ENCODE measurements at regions of chr11 and their contacts with region 1.

Region 1: DNA sequence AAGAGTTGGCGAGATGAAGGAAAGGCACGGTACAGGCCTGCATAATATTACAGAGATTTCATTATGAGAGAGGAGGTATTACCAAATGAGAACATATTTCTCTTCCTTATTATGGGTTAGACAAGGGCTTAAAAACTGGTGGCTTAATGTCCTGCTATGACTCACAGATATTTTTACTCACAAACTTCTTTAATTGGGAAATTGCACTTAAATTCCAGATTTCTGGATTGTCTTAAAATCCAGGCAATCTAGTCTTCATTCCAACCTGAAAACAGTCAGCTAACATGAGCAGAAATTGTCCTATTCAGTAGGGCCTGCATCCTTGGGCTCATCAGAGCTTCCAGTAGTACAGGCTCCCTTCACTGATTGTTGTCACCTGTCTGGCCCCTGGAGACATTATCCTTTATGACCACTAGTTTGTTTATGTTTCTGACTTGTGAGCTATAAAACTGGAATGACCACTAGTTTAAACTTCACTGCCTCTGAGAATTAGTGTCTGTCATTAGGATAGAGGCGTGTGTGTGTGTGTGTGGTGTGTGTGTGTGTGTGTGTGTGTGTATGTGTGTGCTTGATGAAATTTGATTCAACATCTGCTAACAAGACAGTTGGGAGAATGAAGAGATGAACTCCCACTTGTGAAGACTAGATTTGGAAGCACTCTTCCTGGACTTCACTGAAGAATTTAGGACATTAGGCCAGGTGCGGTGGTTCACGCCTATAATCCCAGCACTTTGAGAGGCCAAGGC is 25.1 kb downstream of the DBX1 start:
- DNase-seq: no peak
- ATAC-seq: no peak
- H3K4me3 ChIP-seq: no peak overlapping the region
- H3K27ac ChIP-seq: no peak overlapping the region
- H3K4me1 ChIP-seq: peaks cover 0 to 16% (median 4%) of the 10 kb centered on the region in 12 donors
- H3K27me3 ChIP-seq: peaks cover 0 to 34% (median 0%) of the 10 kb centered on the region in 9 donors
- CTCF ChIP-seq: no peak
- POLR2A ChIP-seq: no peak

Region 2: GRCh38 chr11:20337526-20338154 is 202.5 kb after region 1 on chr11:
- intact Hi-C with region 1: loop called in 3 of 10 experiments (anchors 5 kb)
- DNase-seq: no peak
- ATAC-seq: no peak
- H3K4me3 ChIP-seq: no peak overlapping the region
- H3K27ac ChIP-seq: no peak overlapping the region
- H3K4me1 ChIP-seq: peaks cover 0 to 3% (median 0%) of the 10 kb centered on the region in 12 donors
- H3K27me3 ChIP-seq: peaks cover 5 to 52% (median 12%) of the 10 kb centered on the region in 9 donors
- CTCF ChIP-seq: peak in 10 of 12 donors; percentile 8 to 52 (median 30)
- POLR2A ChIP-seq: no peak

Region 3: GRCh38 chr11:20599221-20600019 is 464.3 kb after region 1 on chr11 and contains the start of gene SLC6A5:
- intact Hi-C with region 1: loop called in 1 of 10 experiments (anchors 5 kb)
- DNase-seq: peak in 3 of 5 donors; percentile 28 to 52 (median 45)
- ATAC-seq: peak in 3 of 4 donors; percentile 34 to 75 (median 69)
- H3K4me3 ChIP-seq: no peak within 1 kb of the TSS
- H3K27ac ChIP-seq: no peak within 1 kb of the TSS
- H3K4me1 ChIP-seq: peaks cover 0 to 18% (median 5%) of the 10 kb centered on the region in 12 donors
- H3K27me3 ChIP-seq: peaks cover 45 to 100% (median 87%) of the 10 kb centered on the region in 9 donors
- CTCF ChIP-seq: no peak
- POLR2A ChIP-seq: no peak
- total RNA-seq, gene SLC6A5: not detected

Measured in heart left ventricle (tissue), 16 donors.